ENCODE measurements at regions of chr12 and their contacts with region 1.

Region 1: DNA sequence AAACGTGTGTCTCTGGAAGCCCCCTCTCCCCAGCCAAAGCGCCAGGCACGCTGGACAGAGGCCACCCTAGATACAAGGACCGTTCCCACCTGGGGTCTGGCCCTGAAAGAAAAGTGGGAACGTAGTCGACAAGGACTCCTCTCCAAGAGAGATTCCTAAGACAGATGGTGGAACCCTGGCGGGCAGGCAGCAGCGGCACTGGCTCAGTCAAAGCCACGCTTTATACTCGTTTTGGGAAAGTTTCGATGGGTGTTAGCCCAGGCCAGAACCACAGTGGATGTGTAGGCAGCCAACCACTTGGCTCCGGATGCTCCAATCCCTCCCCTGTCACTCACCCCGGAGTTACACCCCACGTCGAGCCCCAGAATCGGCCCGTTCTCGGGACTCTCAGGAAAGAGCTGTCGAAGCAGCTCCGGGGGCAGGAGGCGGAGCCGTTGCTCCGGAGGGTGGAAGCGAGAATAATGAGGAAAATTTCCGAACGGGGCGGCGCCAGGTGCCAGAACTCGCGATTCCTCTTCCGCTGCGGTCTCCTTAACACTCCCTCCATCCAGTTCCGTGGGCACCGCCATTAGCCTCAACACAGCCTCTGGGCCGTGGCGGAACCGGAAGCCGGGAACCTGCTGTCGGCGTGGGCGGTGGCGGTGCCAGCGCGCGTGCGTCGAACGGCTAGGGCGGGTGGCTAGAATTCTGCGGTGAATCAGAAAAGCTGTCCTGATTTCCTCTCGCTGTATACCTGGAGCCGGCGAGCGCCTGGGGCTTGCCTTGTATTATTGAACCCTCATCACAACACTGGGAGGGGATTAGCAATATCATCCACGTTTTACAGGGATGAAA is at the start of gene BCDIN3D:
- DNase-seq: peak; percentile 94 to 97 (median 97)
- ATAC-seq: peak; percentile 97 to 98
- H3K4me3 ChIP-seq: peak within 1 kb of the TSS; percentile 69
- H3K27ac ChIP-seq: peak within 1 kb of the TSS; percentile 79
- H3K4me1 ChIP-seq: peaks cover 2% of the 10 kb centered on the region
- H3K27me3 ChIP-seq: no peaks in the 10 kb centered on the region
- total RNA-seq, gene BCDIN3D: 2.9 to 3.6 (median 3.2) TPM

Region 2: GRCh38 chr12:49651855-49652254 is 190.9 kb before region 1 on chr12:
- intact Hi-C with region 1: loop called in 1 of 4 experiments (anchors 10 kb)
- DNase-seq: no peak
- ATAC-seq: no peak
- H3K4me3 ChIP-seq: no peak overlapping the region
- H3K27ac ChIP-seq: no peak overlapping the region
- H3K4me1 ChIP-seq: peaks cover 5% of the 10 kb centered on the region
- H3K27me3 ChIP-seq: no peaks in the 10 kb centered on the region

Region 3: GRCh38 chr12:49987625-49988303 is 145.0 kb after region 1 on chr12:
- intact Hi-C with region 1: no loop called
- DNase-seq: no peak
- ATAC-seq: no peak
- H3K4me3 ChIP-seq: no peak overlapping the region
- H3K27ac ChIP-seq: no peak overlapping the region
- H3K4me1 ChIP-seq: peaks cover 3% of the 10 kb centered on the region
- H3K27me3 ChIP-seq: no peaks in the 10 kb centered on the region

Measured in right cardiac atrium (tissue), 5 donors.